Heart right ventricle (tissue), 16 donors: ENCODE measurements at regions of chr1 and their contacts with region 1.

Region 1: GRCh38 chr1:29156543-29157268 is 25.0 kb downstream of the SRSF4 start:
- DNase-seq: no peak
- ATAC-seq: peak in 7 of 8 donors; percentile 55 to 83 (median 69)
- H3K4me3 ChIP-seq: no peak overlapping the region
- H3K27ac ChIP-seq: peak overlapping the region in 8 of 10 donors; percentile 37 to 74 (median 46)
- H3K4me1 ChIP-seq: peaks cover 7 to 46% (median 39%) of the 10 kb centered on the region in 9 donors
- H3K27me3 ChIP-seq: no peaks in the 10 kb centered on the region
- CTCF ChIP-seq: no peak

Region 2: DNA sequence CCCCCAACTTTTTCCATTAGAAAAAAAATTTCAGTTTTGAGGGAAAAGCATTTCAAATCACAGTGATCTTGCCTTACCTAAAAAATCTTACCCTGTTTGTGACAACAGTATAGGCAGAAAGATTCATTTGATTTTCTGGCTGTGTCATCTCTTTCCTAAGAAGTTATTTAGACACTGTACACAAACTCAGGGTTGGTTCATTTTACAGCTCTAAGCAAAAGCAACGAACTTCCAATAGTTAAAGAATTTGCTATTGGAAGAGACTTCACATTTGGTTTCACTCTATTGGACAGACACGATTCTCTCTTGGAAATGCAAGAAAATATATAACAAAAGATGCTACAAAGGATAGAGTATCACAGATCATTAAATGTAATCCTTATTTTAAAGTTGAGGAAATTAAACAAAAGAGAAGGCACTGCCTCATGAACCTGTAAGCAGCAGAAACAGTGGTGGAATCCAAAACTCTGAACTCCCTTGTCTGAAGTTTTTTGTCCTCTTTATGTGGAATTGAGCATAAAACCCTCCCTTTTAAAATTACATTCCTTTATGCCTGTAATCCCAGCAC is 1089.1 kb before region 1 on chr1:
- intact Hi-C with region 1: loop called in 1 of 10 experiments (anchors 5 kb)
- DNase-seq: no peak
- ATAC-seq: no peak
- H3K4me3 ChIP-seq: no peak overlapping the region
- H3K27ac ChIP-seq: no peak overlapping the region
- H3K4me1 ChIP-seq: peaks cover 0 to 47% (median 13%) of the 10 kb centered on the region in 9 donors
- H3K27me3 ChIP-seq: no peaks in the 10 kb centered on the region
- CTCF ChIP-seq: no peak